PC-9 (cell line): ENCODE measurements at regions of chr22 and their contacts with region 1.

Region 1: GRCh38 chr22:41543854-41544670 is at the start of gene POLR3H:
- DNase-seq: peak; percentile 95 to 99
- H3K4me3 ChIP-seq: peak within 1 kb of the TSS; percentile 83
- H3K27ac ChIP-seq: peak within 1 kb of the TSS; percentile 33; the same call in 1 of the 2 replicates
- H3K4me1 ChIP-seq: peaks cover 17% of the 10 kb centered on the region
- H3K27me3 ChIP-seq: no peaks in the 10 kb centered on the region
- CTCF ChIP-seq: peak; percentile 76
- total RNA-seq, gene POLR3H: 47.6 and 49.7 TPM in 2 replicates

Region 2: DNA sequence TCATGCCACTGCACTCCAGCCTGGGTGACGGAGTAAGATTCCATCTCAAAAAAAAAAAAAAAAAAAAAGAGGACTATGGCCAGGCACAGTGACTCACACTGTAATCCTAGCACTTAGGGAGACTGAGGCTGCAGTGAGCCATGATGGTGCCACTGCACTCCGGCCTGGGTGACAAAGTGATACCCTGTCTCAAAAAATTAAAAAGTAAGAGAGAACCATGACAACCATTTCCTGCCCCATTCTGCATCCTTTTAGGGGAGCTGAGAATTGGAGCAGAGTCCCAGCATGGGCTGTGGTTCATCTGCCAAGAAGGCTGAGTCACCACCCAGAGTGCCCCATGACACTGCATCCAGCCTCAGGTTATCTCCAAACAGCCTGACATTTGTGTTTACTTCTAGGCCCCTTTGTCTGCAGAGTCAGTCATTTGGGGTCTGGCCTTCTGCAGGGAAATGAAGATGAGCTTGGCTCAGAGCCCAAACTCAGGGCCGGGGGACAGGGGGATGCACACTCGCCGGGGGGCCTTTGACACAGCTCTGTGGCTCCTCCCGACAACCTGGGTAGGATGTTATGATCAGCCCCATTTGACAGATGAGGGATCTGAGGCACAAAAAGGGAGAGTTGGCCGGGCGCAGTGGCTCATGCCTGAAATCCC is 21.5 kb after region 1 on chr22:
- CTCF ChIA-PET with region 1: interaction called, 12 read pairs
- POLR2A ChIA-PET with region 1: no interaction called
- intact Hi-C with region 1: no loop called
- DNase-seq: peak; percentile 71 to 73
- H3K4me3 ChIP-seq: no peak overlapping the region
- H3K27ac ChIP-seq: peak overlapping the region; percentile 43
- H3K4me1 ChIP-seq: peaks cover 38% of the 10 kb centered on the region
- H3K27me3 ChIP-seq: no peaks in the 10 kb centered on the region
- CTCF ChIP-seq: no peak

Region 3: DNA sequence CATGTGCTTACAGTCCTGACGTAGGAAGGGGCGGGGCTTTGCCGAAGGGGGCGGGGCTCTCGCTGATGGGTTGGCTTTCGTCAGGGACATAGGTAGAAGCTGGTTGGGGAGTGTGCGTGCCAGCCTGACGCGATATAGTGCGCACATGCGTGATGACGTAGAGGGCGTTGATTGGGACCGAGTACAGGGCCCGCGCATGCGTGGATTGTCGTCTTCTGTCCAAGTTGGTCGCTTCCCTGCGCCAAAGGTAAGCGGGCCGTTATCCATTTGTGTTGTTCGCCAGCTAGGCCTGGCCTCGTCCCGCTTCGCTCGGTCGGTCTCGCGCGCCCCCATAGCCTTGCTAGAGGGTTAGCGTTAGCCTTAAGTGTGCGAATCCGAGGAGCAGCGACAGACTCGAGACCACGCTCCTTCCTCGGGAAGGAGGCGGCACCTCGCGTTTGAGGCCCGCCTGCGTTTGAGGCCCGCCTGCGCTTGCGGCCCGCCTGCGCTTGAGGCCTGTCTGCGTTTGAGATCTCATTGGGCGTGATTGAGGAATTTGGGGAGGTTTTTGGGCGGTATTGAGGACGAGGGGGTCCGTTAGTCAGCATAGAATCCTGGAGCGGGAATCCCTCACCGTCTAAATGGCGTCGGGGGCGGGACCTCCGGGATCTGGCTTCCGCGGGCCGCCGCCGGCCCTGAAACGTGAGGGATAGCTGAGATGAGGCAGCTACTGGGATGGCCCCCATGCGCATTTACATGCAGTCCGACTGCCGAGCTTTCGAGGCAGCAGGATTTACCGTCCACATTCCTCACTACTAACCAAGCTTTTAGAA is 77.2 kb after region 1 on chr22 and contains the start of gene XRCC6:
- CTCF ChIA-PET with region 1: interaction called, 3 read pairs
- POLR2A ChIA-PET with region 1: interaction called, 3 read pairs
- intact Hi-C with region 1: loop called (anchors 2 kb)
- DNase-seq: peak; percentile 99 to 100
- H3K4me3 ChIP-seq: peak within 1 kb of the TSS; percentile 90
- H3K27ac ChIP-seq: peak within 1 kb of the TSS; percentile 79
- H3K4me1 ChIP-seq: peaks cover 33% of the 10 kb centered on the region
- H3K27me3 ChIP-seq: no peaks in the 10 kb centered on the region
- CTCF ChIP-seq: no peak
- total RNA-seq, gene XRCC6: 386 and 486 TPM in 2 replicates

Region 4: DNA sequence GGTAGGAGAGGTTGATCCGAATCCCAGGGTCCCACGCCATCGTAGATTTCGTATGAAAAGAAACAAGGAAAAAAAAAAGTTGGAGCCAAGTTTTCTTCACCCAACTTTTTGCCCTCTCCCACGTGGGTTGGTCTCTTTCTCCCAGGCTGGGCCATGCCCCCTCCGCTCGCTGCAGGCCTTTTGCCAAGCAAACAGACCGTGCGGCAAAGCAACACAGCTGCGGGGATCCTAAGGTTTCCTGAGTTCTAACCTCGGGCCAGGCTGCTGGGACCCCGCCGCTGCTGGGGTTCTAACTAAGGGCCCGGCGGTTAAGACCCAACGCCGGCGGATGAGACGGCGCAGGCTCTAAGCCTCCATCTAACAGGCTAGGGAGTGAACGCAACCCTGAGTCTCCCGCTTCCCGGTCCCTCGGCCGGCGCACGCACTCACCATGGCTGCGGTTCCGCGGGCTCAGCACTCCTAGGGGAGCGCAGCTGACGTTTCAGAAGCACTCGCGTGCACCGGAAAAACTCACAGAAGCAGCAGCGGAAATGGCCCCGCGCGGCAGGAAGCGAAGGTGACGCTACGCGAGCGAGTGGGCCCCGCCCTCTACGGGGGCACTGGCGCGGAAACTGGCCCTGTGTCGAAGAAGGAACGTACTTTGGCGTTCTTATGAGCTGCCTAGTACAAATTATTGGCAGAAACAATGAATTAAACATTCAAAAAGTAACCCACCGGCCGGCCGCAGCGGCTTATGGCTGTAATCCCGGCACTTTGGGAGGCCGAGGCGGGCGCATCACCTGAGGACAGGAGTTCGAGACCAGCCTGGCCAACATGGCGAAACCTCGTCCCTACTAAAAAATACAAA is 144.5 kb after region 1 on chr22 and contains the start of gene SNU13:
- CTCF ChIA-PET with region 1: no interaction called
- POLR2A ChIA-PET with region 1: interaction called, 28 read pairs
- intact Hi-C with region 1: no loop called
- DNase-seq: peak; percentile 91 to 92
- H3K4me3 ChIP-seq: peak within 1 kb of the TSS; percentile 79
- H3K27ac ChIP-seq: peak within 1 kb of the TSS; percentile 74
- H3K4me1 ChIP-seq: peaks cover 29% of the 10 kb centered on the region
- H3K27me3 ChIP-seq: no peaks in the 10 kb centered on the region
- CTCF ChIP-seq: no peak; the same call in 1 of the 2 replicates
- total RNA-seq, gene SNU13: 197 and 229 TPM in 2 replicates

Region 5: DNA sequence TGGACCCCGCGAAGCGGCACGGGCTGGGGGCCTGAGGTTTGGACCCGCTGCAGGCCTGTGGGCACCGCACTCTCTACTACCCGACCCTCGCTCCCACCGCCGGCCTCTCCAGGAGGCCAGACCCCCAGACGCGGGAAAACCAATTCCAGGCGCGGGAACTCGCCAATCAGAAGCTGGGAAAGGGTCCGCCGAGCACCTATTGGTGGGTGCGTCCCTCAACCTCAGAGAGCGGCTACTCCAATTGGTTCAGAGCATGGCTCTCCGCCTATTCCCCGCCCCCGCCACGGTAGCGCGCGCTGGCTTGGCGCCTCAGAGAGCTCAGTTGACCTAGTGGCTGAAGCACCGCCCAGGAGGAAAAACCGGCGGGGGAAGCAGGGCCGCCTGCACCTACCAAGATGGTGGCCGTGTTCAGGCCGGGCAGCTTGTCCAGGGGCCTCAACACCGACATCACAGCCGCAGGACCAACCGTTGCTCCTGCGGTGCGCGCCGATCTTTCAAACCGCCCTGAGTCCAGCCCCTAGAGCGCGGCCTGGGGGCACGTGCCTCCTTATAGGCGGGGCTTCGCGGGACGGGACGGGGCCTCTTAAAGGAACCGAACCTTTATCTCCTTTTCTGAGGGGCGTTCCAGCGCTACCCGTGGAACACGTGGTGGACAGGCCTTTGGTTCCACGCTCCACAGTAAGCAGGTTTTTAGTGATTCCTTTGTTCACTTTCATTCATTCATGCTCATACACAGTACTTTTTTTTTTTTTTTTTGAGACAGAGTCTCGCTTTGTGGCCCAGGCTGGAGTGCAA is 402.8 kb after region 1 on chr22 and contains the start of gene CENPM:
- CTCF ChIA-PET with region 1: no interaction called
- POLR2A ChIA-PET with region 1: no interaction called
- intact Hi-C with region 1: loop called (anchors 5 kb)
- DNase-seq: peak; percentile 92 to 95
- H3K4me3 ChIP-seq: peak within 1 kb of the TSS; percentile 73
- H3K27ac ChIP-seq: no peak within 1 kb of the TSS
- H3K4me1 ChIP-seq: peaks cover 18% of the 10 kb centered on the region
- H3K27me3 ChIP-seq: no peaks in the 10 kb centered on the region
- CTCF ChIP-seq: no peak
- total RNA-seq, gene CENPM: 42.0 and 53.8 TPM in 2 replicates